ENCODE measurements at regions of chr4 and their contacts with region 1.

Region 1: DNA sequence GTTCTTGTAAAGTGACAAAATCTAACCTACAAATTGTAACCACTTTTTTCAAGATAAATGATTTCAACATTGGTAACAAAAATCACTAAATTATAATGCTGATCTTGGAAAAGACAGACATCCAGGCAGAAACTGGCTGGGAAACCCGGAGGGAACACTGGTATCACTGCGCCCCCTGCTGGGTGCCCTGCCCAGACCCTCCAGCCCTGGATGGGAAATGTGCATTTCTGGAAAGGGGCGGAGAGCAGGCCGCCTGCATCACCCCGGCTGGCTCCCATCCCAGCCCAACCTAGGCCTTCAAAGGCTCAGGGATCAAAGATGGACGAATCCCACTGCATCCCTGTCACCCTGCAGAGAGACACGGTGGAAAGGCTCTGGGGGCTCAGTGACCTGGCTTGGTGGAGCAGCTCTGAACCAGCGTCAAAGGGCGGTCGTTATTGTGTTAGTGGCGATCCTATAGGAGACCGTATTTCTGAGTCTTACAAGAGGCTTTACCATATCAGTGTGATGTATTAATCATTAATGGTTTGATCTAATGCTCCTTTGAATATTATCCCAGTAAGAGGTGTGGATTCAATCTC is 37.3 kb downstream of the ACOX3 start:
- DNase-seq: peak; percentile 78
- H3K27ac ChIP-seq: peak overlapping the region; percentile 45
- CTCF ChIP-seq: peak; percentile 89

Region 2: GRCh38 chr4:8241895-8242696 is 161.2 kb before region 1 on chr4:
- CTCF ChIA-PET with region 1: interaction called, 16 read pairs
- POLR2A ChIA-PET with region 1: no interaction called
- DNase-seq: peak; percentile 65
- H3K27ac ChIP-seq: peak overlapping the region; percentile 24
- CTCF ChIP-seq: peak; percentile 92

Region 3: DNA sequence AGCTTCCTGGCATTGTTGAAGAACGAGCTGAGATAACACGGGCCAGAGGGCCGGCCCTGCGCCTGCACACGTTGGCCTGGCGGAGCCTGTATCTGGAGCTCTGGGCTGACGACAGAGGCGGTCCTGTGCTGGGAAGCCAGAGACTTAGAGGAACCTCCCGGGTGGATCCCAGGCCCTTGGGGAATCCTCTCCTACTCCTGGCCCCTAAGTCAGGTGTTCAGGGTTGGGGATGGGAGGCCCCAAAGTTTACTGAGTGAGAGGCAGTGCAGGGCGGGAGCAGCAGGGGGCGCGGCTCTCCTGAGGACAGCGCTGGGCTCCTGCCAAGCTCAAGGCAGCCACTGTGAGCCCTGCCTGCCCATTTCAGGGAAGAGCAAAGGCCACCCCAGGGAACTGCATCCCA is 136.2 kb before region 1 on chr4:
- CTCF ChIA-PET with region 1: interaction called, 15 read pairs
- POLR2A ChIA-PET with region 1: no interaction called
- DNase-seq: peak; percentile 50
- H3K27ac ChIP-seq: no peak overlapping the region
- CTCF ChIP-seq: peak; percentile 74

Region 4: GRCh38 chr4:8297691-8298485 is 105.4 kb before region 1 on chr4:
- CTCF ChIA-PET with region 1: no interaction called
- POLR2A ChIA-PET with region 1: no interaction called
- DNase-seq: no peak
- H3K27ac ChIP-seq: no peak overlapping the region
- CTCF ChIP-seq: no peak